Psoas muscle (tissue), 8 donors: ENCODE measurements at regions of chr6 and their contacts with region 1.

Region 1: GRCh38 chr6:120569714-120570113 is 764.6 kb downstream of the TBC1D32 start:
- DNase-seq: no peak
- ATAC-seq: no peak
- H3K4me3 ChIP-seq: no peak overlapping the region
- H3K27ac ChIP-seq: no peak overlapping the region
- H3K4me1 ChIP-seq: no peaks in the 10 kb centered on the region
- H3K27me3 ChIP-seq: no peaks in the 10 kb centered on the region
- CTCF ChIP-seq: no peak

Region 2: GRCh38 chr6:121161879-121162278 is 592.2 kb after region 1 on chr6:
- intact Hi-C with region 1: loop called in 1 of 2 experiments (anchors 5 kb)
- DNase-seq: no peak
- ATAC-seq: no peak
- H3K4me3 ChIP-seq: no peak overlapping the region
- H3K27ac ChIP-seq: no peak overlapping the region
- H3K4me1 ChIP-seq: no peaks in the 10 kb centered on the region
- H3K27me3 ChIP-seq: no peaks in the 10 kb centered on the region
- CTCF ChIP-seq: no peak

Region 3: GRCh38 chr6:121399966-121400365 is 830.3 kb after region 1 on chr6:
- intact Hi-C with region 1: no loop called
- DNase-seq: no peak
- ATAC-seq: no peak
- H3K4me3 ChIP-seq: no peak overlapping the region
- H3K27ac ChIP-seq: no peak overlapping the region
- H3K4me1 ChIP-seq: no peaks in the 10 kb centered on the region
- H3K27me3 ChIP-seq: peaks cover 0 to 4% (median 0%) of the 10 kb centered on the region in 3 donors
- CTCF ChIP-seq: no peak